Activated CD4-positive, alpha-beta memory T cell treated with anti-CD3 and anti-CD28 coated beads, Interleukin-2, amount 10 ng/mL, durations not matched to agents 7 days and 5 days (primary cell): ENCODE measurements at regions of chr6 and their contacts with region 1.

Region 1: DNA sequence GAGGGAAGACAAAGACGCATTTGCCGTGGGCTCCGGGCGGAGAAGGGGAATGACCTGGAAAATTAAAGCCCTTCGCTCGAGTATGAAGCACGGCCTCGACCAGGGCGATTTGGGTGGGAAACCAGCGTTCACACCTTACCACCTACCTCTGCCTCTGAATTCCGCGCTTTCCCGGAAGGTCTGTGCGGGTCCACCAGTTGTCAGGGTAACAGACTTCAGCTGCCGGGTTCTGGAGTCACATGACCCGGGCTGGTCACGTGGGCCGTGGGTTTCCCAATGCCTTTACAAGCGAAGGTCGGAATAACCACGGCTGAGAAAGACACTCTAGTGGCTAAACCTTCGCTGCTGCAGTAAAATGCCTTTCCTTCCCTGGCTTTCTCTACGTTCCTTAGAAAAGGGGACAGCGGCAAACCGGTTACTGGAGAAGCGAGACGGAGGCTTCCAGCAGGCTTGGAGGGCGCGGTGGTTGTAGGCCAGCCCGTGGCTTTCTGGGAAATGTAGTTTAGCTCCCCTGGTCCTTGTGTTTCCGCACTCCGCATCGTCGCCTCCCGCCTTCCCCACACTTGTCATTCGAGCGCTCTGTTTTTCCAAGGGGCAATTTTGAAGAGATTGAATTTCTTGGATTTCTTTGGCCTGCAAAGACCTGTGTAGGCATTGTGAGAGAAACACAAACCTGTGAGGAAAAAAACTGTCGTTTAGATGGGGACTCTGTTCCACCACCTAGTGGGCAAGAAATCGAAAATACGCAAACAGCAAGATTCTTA is at the start of gene CEP162:
- DNase-seq: peak; percentile 92
- H3K4me3 Mint-ChIP-seq: peak within 1 kb of the TSS; percentile 96
- H3K27ac Mint-ChIP-seq: peak within 1 kb of the TSS; percentile 69
- H3K4me1 Mint-ChIP-seq: peaks cover 21% of the 10 kb centered on the region
- H3K27me3 Mint-ChIP-seq: peaks cover 8% of the 10 kb centered on the region
- total RNA-seq, gene CEP162: 8.1 to 9.6 TPM

Region 2: DNA sequence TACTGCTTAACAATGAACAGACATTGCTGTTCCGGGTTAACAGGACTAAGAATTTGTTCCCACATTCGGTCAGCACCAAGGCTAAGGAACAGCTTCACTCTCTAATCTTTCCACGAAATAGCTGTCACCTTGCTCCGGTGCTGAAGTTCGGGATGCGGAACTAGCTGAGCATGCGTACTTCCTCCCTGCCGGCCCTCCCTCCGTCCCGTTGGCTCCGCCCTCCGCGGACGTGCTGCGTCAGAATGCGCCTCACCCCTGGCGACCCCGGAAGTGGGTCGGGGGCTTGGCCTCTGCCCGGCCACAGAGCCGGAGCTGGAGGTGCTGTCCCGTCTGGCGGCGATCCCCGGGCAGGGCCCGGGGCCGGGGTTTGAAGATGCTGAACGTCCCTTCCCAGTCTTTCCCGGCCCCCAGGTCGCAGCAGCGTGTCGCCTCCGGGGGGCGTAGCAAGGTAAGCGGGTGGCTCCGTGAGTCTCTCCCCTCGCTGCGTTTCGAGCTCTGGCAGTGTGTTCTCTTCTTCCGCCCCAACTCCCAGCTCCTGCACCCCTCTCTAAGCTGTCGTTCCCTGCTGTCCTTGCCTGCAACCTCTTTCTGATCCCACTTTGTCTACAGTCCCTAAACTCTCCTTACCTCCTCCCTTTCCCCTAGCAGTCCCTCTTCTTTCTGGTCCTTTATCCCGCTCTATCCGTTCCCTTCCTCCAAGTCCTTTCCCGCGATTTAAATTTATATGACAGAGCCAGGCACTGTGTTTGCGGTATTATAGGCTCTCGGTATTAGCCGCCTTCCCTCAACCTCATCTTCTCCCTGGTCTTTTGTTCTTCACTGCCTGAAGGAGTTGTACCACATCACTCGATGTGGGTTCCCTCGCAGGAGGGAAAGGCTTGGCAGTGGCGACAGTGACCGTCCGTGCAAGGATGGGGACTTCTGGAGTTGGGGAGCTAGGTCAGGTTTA is 367.9 kb before region 1 on chr6 and contains the start of gene CYB5R4:
- CTCF ChIA-PET with region 1: interaction called, 20 read pairs
- POLR2A ChIA-PET with region 1: no interaction called
- DNase-seq: peak; percentile 95
- H3K4me3 Mint-ChIP-seq: peak within 1 kb of the TSS; percentile 100
- H3K27ac Mint-ChIP-seq: peak within 1 kb of the TSS; percentile 79
- H3K4me1 Mint-ChIP-seq: peaks cover 28% of the 10 kb centered on the region
- H3K27me3 Mint-ChIP-seq: peaks cover 13% of the 10 kb centered on the region
- total RNA-seq, gene CYB5R4: 36.0 to 36.1 TPM

Region 3: GRCh38 chr6:83884523-83884922 is 343.1 kb before region 1 on chr6:
- CTCF ChIA-PET with region 1: interaction called, 15 read pairs
- POLR2A ChIA-PET with region 1: no interaction called
- DNase-seq: no peak
- H3K4me3 Mint-ChIP-seq: no peak overlapping the region
- H3K27ac Mint-ChIP-seq: no peak overlapping the region
- H3K4me1 Mint-ChIP-seq: peaks cover 6% of the 10 kb centered on the region
- H3K27me3 Mint-ChIP-seq: no peaks in the 10 kb centered on the region

Region 4: GRCh38 chr6:84103029-84103428 is 124.6 kb before region 1 on chr6:
- CTCF ChIA-PET with region 1: no interaction called
- POLR2A ChIA-PET with region 1: no interaction called
- DNase-seq: no peak
- H3K4me3 Mint-ChIP-seq: no peak overlapping the region
- H3K27ac Mint-ChIP-seq: no peak overlapping the region
- H3K4me1 Mint-ChIP-seq: no peaks in the 10 kb centered on the region
- H3K27me3 Mint-ChIP-seq: peaks cover 3% of the 10 kb centered on the region